ENCODE measurements at regions of chr11 and their contacts with region 1.

Region 1: GRCh38 chr11:66677599-66678375 is at the start of gene RBM4B:
- DNase-seq: peak; percentile 95
- ATAC-seq: peak; percentile 91
- H3K4me3 Mint-ChIP-seq: peak within 1 kb of the TSS; percentile 97
- H3K27ac Mint-ChIP-seq: peak within 1 kb of the TSS; percentile 98
- H3K4me1 Mint-ChIP-seq: peaks cover 38% of the 10 kb centered on the region
- H3K27me3 Mint-ChIP-seq: no peaks in the 10 kb centered on the region
- CTCF ChIP-seq: no peak
- total RNA-seq, gene RBM4B: 30.8 and 34.4 TPM in 2 replicates

Region 2: GRCh38 chr11:66311965-66312548 is 365.7 kb before region 1 on chr11:
- CTCF ChIA-PET with region 1: interaction called, 3 read pairs
- POLR2A ChIA-PET with region 1: interaction called, 9 read pairs
- intact Hi-C with region 1: loop called (anchors 2 kb)
- DNase-seq: peak; percentile 98
- ATAC-seq: peak; percentile 79
- H3K4me3 Mint-ChIP-seq: peak overlapping the region; percentile 93
- H3K27ac Mint-ChIP-seq: peak overlapping the region; percentile 97
- H3K4me1 Mint-ChIP-seq: peaks cover 30% of the 10 kb centered on the region
- H3K27me3 Mint-ChIP-seq: no peaks in the 10 kb centered on the region
- CTCF ChIP-seq: peak; percentile 95

Region 3: DNA sequence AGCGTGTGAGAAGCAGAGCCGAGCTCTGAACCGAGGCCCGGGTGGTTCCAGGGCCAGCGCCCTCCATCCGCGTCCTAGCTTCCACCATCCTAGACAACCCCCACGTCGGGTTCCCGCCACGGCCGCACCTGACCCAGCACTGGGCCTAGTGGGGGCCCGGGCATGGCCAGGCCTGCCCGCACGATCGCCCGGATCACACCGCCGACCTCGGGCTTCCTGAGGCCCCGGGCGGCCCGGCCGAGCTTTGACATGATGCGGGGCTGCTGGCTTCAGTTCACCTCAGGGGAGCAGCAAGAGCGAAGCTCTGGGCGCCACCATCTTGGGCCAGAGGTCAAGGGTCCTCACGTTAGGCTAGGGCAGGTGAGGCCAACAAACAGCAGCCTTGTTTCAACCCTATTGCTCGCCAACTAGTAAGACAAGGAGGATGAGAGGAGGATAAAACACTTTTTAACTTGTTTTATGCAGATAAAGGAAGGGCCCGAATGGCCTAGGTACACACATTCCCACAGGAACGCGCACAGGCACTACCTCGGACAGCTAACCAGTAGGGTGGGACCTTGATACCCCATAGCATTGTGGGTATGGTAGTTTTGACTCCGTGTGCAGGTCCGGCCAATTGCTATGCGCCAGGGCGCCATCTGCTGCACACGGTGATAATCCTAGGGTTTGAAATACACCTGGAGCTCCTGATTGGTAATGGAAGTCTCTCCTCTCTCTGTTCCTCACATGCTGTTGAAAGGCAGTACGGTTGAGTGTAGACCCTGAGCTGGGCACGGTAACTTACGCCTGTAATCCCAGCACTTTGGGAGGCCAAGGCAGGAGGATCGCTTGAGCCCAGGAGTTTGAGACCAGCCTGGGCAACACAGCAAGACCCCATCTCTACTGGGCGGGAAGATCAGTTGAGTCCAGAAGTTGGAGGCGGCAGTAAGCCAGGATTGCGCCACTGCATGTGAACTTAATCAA is 239.0 kb before region 1 on chr11 and contains the start of gene MRPL11:
- CTCF ChIA-PET with region 1: interaction called, 19 read pairs
- POLR2A ChIA-PET with region 1: interaction called, 9 read pairs
- intact Hi-C with region 1: loop called (anchors 1 kb)
- DNase-seq: peak; percentile 78
- ATAC-seq: peak; percentile 98
- H3K4me3 Mint-ChIP-seq: peak within 1 kb of the TSS; percentile 87
- H3K27ac Mint-ChIP-seq: peak within 1 kb of the TSS; percentile 97
- H3K4me1 Mint-ChIP-seq: peaks cover 8% of the 10 kb centered on the region
- H3K27me3 Mint-ChIP-seq: peaks cover 4% of the 10 kb centered on the region
- CTCF ChIP-seq: no peak
- total RNA-seq, gene MRPL11: 62.6 and 74.3 TPM in 2 replicates

Region 4: GRCh38 chr11:66545701-66546367 is 132.0 kb before region 1 on chr11 and contains the start of gene ZDHHC24:
- CTCF ChIA-PET with region 1: interaction called, 18 read pairs
- POLR2A ChIA-PET with region 1: interaction called, 58 read pairs
- intact Hi-C with region 1: loop called (anchors 1 kb)
- DNase-seq: peak; percentile 86
- ATAC-seq: peak; percentile 85
- H3K4me3 Mint-ChIP-seq: peak within 1 kb of the TSS; percentile 77
- H3K27ac Mint-ChIP-seq: peak within 1 kb of the TSS; percentile 57
- H3K4me1 Mint-ChIP-seq: peaks cover 35% of the 10 kb centered on the region
- H3K27me3 Mint-ChIP-seq: no peaks in the 10 kb centered on the region
- CTCF ChIP-seq: no peak
- total RNA-seq, gene ZDHHC24: 14.6 and 19.0 TPM in 2 replicates

Region 5: DNA sequence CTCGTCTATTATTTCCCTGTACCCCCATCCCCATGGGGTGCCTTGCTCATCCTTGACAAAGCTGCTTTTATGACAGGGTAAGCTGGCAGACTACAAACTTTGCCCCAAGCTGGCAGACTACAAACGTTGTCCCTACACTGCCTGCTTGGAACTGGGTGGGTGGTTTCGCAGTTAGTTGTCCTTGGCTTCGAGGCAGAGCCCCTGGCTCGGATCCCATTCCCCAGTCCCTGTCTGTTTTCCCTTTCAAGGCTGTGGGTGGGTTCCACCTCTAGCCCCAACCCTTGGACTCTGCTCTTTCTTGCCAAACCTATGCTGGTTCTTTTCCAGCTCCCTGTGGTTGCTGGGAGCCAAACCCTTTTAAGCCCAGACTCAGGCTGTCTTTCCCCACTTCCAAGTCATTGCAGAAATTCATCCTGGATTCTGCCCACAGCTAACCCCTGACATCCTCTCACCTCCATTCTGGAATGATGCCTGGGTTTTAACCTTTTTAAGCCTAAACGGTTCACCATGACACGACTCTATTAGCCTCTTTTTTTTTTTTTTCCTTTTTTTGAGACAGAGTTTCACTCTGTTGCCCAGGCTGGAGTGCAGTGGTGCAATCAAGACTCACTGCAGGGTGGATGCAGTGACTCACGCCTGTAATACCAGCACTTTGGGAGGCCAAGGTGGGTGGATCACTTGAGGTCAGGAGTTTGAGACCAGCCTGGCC is 70.5 kb before region 1 on chr11:
- CTCF ChIA-PET with region 1: interaction called, 5 read pairs
- POLR2A ChIA-PET with region 1: interaction called, 47 read pairs
- intact Hi-C with region 1: loop called (anchors 1 kb)
- DNase-seq: no peak
- ATAC-seq: no peak
- H3K4me3 Mint-ChIP-seq: no peak overlapping the region
- H3K27ac Mint-ChIP-seq: peak overlapping the region; percentile 80
- H3K4me1 Mint-ChIP-seq: peaks cover 42% of the 10 kb centered on the region
- H3K27me3 Mint-ChIP-seq: no peaks in the 10 kb centered on the region
- CTCF ChIP-seq: no peak

Region 6: GRCh38 chr11:66659763-66660162 is 18.0 kb before region 1 on chr11:
- CTCF ChIA-PET with region 1: interaction called, 4 read pairs
- POLR2A ChIA-PET with region 1: interaction called, 32 read pairs
- intact Hi-C with region 1: loop called (anchors 2 kb)
- DNase-seq: no peak
- ATAC-seq: peak; percentile 57
- H3K4me3 Mint-ChIP-seq: peak overlapping the region; percentile 55
- H3K27ac Mint-ChIP-seq: peak overlapping the region; percentile 74
- H3K4me1 Mint-ChIP-seq: peaks cover 39% of the 10 kb centered on the region
- H3K27me3 Mint-ChIP-seq: no peaks in the 10 kb centered on the region
- CTCF ChIP-seq: no peak

Measured in activated B cell treated with CpG ODN at 0.5 μM for 24 hours (primary cell).